AG04449 (cell line): ENCODE measurements at regions of chr7 and their contacts with region 1.

Region 1: GRCh38 chr7:129271500-129272355 is 46.9 kb downstream of the AHCYL2 start:
- DNase-seq: no peak
- H3K4me3 ChIP-seq: no peak overlapping the region
- CTCF ChIP-seq: peak; percentile 59

Region 2: DNA sequence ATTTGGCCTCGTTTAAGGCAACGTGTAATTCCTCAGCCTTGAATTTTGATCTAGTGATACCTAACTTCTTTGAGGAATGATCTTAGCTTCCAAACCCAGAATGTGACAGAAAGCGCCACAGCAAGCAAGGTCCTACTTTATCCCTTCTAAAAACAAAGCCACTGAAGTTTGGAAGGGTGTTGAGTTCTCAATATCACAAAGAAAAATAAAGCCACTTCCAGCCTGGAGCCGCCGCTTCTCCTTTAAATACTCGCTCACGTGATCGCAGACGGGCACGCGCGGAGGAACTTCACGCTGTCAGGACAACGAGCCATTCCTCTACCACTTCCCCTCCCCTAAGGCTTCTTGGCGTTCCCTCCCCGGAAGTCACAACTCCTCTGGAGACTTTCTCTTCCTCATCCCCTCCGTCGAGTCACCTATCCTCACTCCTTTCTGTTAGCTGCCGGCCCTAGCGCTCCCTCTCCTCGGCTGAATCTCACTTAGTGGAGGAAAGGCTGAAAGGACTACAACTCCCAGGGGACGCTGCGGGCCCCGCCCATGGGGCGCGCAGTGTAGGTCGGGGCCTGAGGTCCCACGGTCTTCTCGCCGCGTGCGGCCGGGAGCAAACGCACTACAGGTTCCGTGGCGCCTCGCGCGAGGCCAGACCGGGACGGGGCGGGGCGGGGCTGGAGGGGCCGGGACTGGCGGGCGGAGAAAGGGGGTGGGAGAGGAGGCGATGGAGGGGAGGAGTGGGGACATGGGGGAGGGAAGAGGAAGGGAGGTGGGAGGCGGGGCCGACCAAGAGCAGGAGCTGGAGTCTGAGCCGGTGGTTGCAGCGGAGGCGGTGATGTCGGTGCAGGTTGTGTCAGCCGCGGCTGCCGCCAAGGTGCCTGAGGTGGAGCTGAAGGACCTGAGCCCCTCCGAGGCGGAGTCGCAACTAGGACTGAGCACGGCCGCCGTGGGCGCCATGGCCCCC is 47.2 kb before region 1 on chr7 and contains the start of gene AHCYL2:
- CTCF ChIA-PET with region 1: interaction called, 82 read pairs
- POLR2A ChIA-PET with region 1: no interaction called
- DNase-seq: peak; percentile 71
- H3K4me3 ChIP-seq: peak within 1 kb of the TSS; percentile 78
- CTCF ChIP-seq: no peak

Region 3: GRCh38 chr7:129258649-129259389 is 12.9 kb before region 1 on chr7:
- CTCF ChIA-PET with region 1: interaction called, 38 read pairs
- POLR2A ChIA-PET with region 1: no interaction called
- DNase-seq: no peak
- H3K4me3 ChIP-seq: no peak overlapping the region
- CTCF ChIP-seq: no peak

Region 4: GRCh38 chr7:129285111-129285510 is 13.4 kb after region 1 on chr7:
- CTCF ChIA-PET with region 1: interaction called, 24 read pairs
- POLR2A ChIA-PET with region 1: no interaction called
- DNase-seq: no peak
- H3K4me3 ChIP-seq: no peak overlapping the region
- CTCF ChIP-seq: no peak

Region 5: DNA sequence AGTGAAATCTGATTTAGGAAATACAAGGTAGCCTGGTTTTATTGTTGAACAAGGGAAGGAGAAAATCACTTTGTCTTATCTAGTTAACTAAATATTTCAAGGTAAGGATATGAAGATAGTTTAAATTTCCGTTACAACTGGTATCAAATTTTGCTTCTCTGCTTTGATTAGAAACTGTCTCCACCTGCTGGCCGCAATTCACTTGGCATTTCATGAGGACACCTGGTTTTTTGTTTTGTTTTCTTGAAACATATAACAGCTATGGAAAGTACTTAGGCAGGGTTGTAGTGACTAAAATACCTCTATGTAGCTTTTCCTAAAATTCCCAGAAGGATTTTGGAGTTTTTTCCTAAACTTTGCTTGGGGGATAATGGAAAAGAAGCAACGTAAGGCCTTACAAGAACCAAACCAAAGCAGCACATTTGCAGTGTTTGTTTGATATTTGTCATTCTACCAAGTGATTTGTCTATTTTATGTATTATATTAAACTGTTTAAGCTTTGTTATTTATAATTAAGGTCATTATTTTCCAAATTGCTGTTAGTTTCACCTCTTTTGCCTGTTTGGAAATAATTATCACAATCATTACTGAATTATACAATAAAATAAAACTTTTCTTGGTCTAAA is 26.7 kb after region 1 on chr7:
- CTCF ChIA-PET with region 1: interaction called, 14 read pairs
- POLR2A ChIA-PET with region 1: no interaction called
- DNase-seq: no peak
- H3K4me3 ChIP-seq: no peak overlapping the region
- CTCF ChIP-seq: peak; percentile 56